Dorsolateral prefrontal cortex (tissue), 120 donors: ENCODE measurements at regions of chr3 and their contacts with region 1.

Region 1: GRCh38 chr3:31981206-31982181 is at the starts of genes OSBPL10 and ZNF860:
- DNase-seq: peak; percentile 58 to 85 (median 79)
- H3K4me3 ChIP-seq: peak within 1 kb of the TSS; percentile 43 to 83 (median 69)
- H3K27ac ChIP-seq: peak within 1 kb of the TSS in 53 of 59 donors; percentile 21 to 89 (median 74)
- H3K27me3 ChIP-seq: peaks cover 0 to 5% (median 0%) of the 10 kb centered on the region in 45 donors
- CTCF ChIP-seq: peak in 1 of 56 donors; percentile 9
- total RNA-seq, gene OSBPL10: 15.2 to 52.8 (median 33.8) TPM
- total RNA-seq, gene ZNF860: 0.25 to 4.0 (median 1.3) TPM

Region 2: GRCh38 chr3:31848911-31849310 is 132.6 kb before region 1 on chr3:
- intact Hi-C with region 1: no loop called
- DNase-seq: no peak
- H3K4me3 ChIP-seq: no peak overlapping the region
- H3K27ac ChIP-seq: no peak overlapping the region
- H3K27me3 ChIP-seq: no peaks in the 10 kb centered on the region
- CTCF ChIP-seq: no peak

Region 3: GRCh38 chr3:31876331-31876730 is 105.2 kb before region 1 on chr3:
- intact Hi-C with region 1: loop called in 1 of 2 experiments (anchors 10 kb)
- DNase-seq: peak in 3 of 10 donors; percentile 28 to 46 (median 41)
- H3K4me3 ChIP-seq: peak overlapping the region in 9 of 59 donors; percentile 0 to 21 (median 9)
- H3K27ac ChIP-seq: peak overlapping the region in 34 of 59 donors; percentile 4 to 75 (median 42)
- H3K27me3 ChIP-seq: no peaks in the 10 kb centered on the region
- CTCF ChIP-seq: no peak